ENCODE measurements at regions of chr13 and their contacts with region 1.

Region 1: GRCh38 chr13:21130116-21130515 is 46.2 kb downstream of the SKA3 start:
- DNase-seq: no peak
- ATAC-seq: no peak

Region 2: DNA sequence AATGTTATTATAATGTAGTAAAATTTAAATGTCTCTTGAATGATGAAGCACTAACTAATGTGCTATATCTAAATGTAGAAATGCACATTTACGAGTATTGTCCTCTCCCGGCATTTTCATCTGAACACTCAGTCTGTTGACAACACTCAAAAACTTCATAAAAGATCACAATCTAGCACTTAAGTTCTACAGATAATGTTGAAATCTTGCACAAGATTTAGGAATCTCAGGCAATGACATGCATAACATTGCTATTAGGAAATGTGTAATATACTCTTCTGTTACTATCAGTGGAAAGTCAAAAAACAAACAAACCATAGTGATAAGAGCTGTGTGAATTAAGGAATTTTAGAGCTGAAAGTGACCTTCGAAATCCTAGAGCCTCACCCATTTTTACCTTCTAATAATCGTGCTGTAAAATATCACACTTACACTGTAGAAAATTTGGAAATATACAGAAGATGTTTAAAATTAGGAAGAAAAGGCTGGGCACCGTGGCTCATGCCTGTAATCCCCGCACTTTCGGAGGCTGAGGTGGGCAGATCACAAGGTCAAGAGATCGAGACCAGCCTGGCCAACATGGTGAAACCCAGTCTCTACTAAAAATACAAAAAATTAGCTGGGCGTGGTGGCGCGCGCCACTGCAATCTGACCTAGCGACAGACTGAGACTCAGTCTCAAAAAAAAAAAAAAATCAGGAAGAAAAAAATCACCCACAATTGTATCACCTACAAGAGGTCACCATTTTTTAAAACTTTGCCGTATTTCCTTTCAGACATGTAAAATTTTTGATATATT is 189.8 kb before region 1 on chr13:
- intact Hi-C with region 1: loop called in 1 of 2 experiments (anchors 5 kb)
- DNase-seq: no peak
- ATAC-seq: no peak

Region 3: DNA sequence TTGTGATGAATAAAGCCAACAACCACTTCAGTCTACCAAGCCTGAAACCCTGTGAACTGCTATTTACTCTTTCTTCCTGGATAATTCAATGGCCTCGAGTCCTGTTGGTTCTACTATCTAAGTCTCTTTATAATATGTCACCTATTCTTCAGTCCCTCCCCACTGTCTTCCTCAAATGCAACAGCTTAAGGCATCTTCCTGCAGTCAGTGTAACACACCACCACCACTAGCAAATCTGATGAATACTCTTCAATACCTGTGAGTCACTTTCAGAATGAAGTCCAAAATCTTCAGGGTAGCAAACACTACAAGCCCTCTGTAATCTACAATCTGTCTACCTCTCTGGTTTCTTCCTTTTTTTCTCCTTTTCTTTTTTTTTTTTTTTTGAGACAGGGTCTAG is 296.1 kb after region 1 on chr13:
- intact Hi-C with region 1: no loop called
- DNase-seq: no peak
- ATAC-seq: no peak

Region 4: GRCh38 chr13:21767025-21767424 is 636.9 kb after region 1 on chr13:
- intact Hi-C with region 1: no loop called
- DNase-seq: no peak
- ATAC-seq: no peak

Measured in left cardiac atrium (tissue), 4 donors.